Mucosa of descending colon (tissue), 3 donors: ENCODE measurements at regions of chr10 and their contacts with region 1.

Region 1: GRCh38 chr10:6678211-6678803 is 98.2 kb upstream of the PRKCQ start:
- DNase-seq: peak in 2 of 3 donors; percentile 57 to 78
- ATAC-seq: peak; percentile 52
- H3K4me3 ChIP-seq: no peak overlapping the region
- H3K4me1 ChIP-seq: no peaks in the 10 kb centered on the region
- CTCF ChIP-seq: peak; percentile 26

Region 2: DNA sequence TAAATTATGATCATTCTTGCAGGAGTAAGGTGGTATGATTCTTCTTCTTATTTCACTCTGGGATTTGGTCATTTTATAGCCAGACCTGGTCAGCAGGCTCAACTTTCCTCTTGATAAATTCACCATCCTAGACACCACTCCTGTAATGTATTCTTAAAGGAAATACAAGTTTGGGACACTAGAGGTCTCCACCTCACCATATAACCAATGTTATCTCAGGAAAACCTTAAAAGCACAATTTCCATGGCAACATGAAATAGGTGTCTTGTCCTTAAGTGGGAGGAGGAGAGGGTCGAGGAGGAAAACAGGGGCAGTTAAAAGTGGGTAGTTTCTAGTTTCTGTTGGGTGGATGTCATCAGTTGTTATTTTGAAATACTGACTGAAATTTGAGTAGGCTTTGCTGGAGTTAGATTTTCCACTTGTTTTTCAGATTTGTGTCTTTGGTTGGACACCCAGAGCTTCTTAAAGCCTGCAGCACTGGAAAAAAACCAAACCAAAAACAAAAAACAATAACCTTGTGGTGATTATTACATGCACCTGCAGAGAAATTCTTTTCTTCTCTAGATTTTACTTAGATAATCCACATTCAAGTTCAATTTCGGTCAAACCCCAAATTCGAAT is 261.3 kb before region 1 on chr10:
- intact Hi-C with region 1: loop called in 1 of 2 experiments (anchors 5 kb)
- DNase-seq: peak in 1 of 3 donors; percentile 47
- ATAC-seq: peak; percentile 62
- H3K4me3 ChIP-seq: no peak overlapping the region
- H3K4me1 ChIP-seq: no peaks in the 10 kb centered on the region
- CTCF ChIP-seq: peak; percentile 34

Region 3: GRCh38 chr10:6647811-6648526 is 30.3 kb before region 1 on chr10:
- intact Hi-C with region 1: no loop called
- DNase-seq: peak in 2 of 3 donors; percentile 28 to 73
- ATAC-seq: peak; percentile 74
- H3K4me3 ChIP-seq: no peak overlapping the region
- H3K4me1 ChIP-seq: no peaks in the 10 kb centered on the region
- CTCF ChIP-seq: peak; percentile 53